ENCODE measurements at regions of chr13 and their contacts with region 1.

Region 1: GRCh38 chr13:51502153-51502651 is 49.4 kb upstream of the INTS6 start:
- DNase-seq: peak; percentile 66
- H3K4me3 Mint-ChIP-seq: no peak overlapping the region
- H3K27ac Mint-ChIP-seq: no peak overlapping the region
- H3K4me1 Mint-ChIP-seq: peaks cover 23% of the 10 kb centered on the region
- H3K27me3 Mint-ChIP-seq: no peaks in the 10 kb centered on the region

Region 2: DNA sequence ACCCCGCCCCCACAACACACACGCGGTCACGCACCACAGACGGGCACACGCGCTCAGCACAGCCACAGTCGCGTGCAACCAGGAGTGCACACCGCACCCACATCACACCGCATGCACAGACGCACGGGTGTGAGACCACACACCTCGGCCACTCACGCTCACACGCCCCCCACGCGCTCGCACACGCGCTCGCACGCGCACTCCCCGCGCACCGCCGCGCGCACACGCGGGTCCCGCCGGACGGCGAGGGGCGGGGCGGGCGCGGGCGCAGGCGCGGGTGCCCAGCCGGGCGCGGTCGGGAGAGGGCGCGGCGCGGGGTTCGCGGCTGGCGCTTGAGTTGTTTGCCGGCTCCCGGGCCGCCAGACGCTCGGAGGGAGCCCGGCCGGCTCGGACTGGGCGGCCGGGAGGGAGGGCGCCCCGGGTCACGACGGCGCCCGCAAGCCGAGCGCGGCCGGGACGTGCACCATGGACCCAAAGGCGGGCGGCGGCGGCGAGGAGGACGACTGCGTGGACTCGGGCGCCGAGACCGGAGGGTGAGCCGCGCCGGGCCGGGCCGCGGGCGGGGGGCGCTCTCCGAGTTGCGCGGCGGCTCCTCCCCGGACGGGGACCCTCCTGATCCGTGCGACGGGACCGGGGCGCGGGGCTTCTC is 280.0 kb before region 1 on chr13 and contains the start of gene FAM124A:
- CTCF ChIA-PET with region 1: no interaction called
- intact Hi-C with region 1: loop called (anchors 5 kb)
- DNase-seq: peak; percentile 49
- H3K4me3 Mint-ChIP-seq: peak within 1 kb of the TSS; percentile 73
- H3K27ac Mint-ChIP-seq: no peak within 1 kb of the TSS
- H3K4me1 Mint-ChIP-seq: no peaks in the 10 kb centered on the region
- H3K27me3 Mint-ChIP-seq: peaks cover 39% of the 10 kb centered on the region
- total RNA-seq, gene FAM124A: not detected

Region 3: GRCh38 chr13:51764184-51765141 is 262.3 kb after region 1 on chr13:
- CTCF ChIA-PET with region 1: no interaction called
- intact Hi-C with region 1: loop called (anchors 1 kb)
- DNase-seq: peak; percentile 84
- H3K4me3 Mint-ChIP-seq: peak overlapping the region; percentile 73
- H3K27ac Mint-ChIP-seq: peak overlapping the region; percentile 82
- H3K4me1 Mint-ChIP-seq: peaks cover 35% of the 10 kb centered on the region
- H3K27me3 Mint-ChIP-seq: no peaks in the 10 kb centered on the region

Measured in activated naive CD4-positive, alpha-beta T cell treated with anti-CD3 and anti-CD28 coated beads for 36 hours (primary cell).